ENCODE measurements at regions of chr20 and their contacts with region 1.

Region 1: GRCh38 chr20:34302723-34303528 is at the start of gene AHCY:
- DNase-seq: peak; percentile 99

Region 2: GRCh38 chr20:34516247-34517113 is 213.6 kb after region 1 on chr20 and contains the start of gene DYNLRB1:
- in situ Hi-C with region 1: loop called (anchors 25 kb)
- DNase-seq: peak; percentile 90

Region 3: DNA sequence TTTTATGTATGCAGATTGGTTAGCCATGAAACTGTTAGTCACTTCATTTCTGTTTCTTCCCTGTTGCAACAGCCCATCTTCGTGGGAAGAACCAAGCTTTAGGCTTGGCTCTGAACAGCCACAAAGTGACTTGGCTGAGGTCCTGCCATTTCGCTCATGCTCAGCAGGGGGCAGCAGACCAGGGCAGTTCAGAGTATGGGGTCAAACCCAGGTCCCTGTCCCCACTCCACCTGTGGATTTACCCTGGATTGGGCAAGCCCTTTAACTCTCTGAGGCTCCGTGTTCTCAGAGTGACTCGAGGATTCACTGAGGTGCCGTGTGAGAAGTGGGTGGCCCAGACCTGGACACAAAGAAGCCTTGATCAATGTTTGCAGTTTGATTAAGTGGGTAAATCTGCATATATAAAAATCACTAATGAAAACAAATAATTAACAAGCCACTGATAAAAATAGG is 235.8 kb after region 1 on chr20:
- in situ Hi-C with region 1: no loop called
- DNase-seq: peak; percentile 68

Region 4: GRCh38 chr20:34704177-34705007 is 401.5 kb after region 1 on chr20 and contains the start of gene TP53INP2:
- in situ Hi-C with region 1: loop called (anchors 25 kb)
- DNase-seq: peak; percentile 76

Measured in KBM-7 (cell line).